Activated CD8-positive, alpha-beta memory T cell treated with anti-CD3 and anti-CD28 coated beads, Interleukin-2, amount 10 ng/mL, durations not matched to agents 7 days and 5 days (primary cell): ENCODE measurements at regions of chr12 and their contacts with region 1.

Region 1: DNA sequence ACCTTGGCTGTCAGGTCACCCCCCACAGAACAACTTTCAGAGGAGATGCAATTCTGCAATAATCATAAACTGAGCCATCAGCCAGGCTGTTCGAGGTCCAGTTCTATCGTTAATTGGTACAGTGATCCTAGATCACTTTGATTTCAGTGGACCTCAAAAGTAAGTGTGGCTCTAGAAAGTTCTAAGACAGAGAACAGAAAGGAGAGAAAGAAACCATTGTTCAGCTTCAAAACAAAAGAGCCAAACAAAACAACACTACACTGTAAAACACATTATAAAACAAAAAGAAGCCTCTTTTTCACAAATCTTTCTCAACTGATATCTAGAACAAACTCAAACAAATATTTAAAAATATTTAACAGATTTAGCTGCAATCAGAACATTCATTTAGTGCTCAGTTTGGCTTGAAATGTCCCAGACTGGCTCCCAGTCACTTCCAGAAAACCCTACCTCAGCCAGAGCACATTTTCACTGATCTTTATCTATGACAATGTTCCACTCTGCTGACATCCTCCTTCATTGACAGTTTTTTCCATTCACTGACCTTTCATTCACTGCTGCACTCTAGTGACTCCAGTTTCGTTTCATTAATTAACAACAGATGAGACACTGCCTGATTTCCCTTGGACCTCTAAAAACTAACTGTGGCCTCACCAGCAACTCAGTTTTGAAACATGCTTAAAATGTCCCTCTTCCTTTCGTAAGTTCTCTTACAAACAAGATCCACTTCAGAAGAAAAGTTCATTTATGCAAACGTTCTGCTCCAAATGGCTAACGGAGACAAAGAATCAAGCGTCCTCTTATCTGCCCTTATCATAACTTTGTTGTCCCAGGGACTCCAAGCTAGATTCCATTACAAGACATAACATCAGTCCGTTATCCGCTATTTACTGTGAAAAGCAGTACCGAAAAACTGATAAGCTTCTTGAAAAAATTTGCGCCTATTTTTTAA is 56.8 kb downstream of the DUSP16 start:
- DNase-seq: no peak
- ATAC-seq: peak; percentile 75
- H3K4me3 Mint-ChIP-seq: peak overlapping the region; percentile 17
- H3K27ac Mint-ChIP-seq: peak overlapping the region; percentile 67
- H3K4me1 Mint-ChIP-seq: peaks cover 51% of the 10 kb centered on the region
- H3K27me3 Mint-ChIP-seq: no peaks in the 10 kb centered on the region

Region 2: DNA sequence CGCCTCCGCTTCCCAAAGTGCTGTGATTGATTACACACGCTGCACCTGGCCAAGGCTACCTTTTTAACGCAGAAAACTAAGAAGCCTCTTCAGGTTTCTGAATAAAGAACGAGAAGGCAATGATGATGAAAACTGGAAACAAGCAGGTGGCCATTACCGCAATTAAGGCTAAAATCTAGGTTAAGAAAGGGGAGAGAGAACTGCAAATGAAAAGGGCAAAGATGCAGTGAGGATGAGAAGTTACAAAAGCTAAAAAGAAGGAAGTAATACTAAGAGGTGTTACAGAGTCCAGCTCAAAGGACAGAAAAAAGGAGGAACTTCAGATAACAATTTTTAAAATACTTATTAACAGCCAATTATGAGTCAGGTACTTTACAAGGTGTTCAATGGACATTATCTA is 22.9 kb before region 1 on chr12:
- CTCF ChIA-PET with region 1: interaction called, 16 read pairs
- DNase-seq: no peak
- ATAC-seq: no peak
- H3K4me3 Mint-ChIP-seq: peak overlapping the region; percentile 79
- H3K27ac Mint-ChIP-seq: peak overlapping the region; percentile 99
- H3K4me1 Mint-ChIP-seq: peaks cover 74% of the 10 kb centered on the region
- H3K27me3 Mint-ChIP-seq: no peaks in the 10 kb centered on the region

Region 3: GRCh38 chr12:12491606-12492005 is 14.2 kb before region 1 on chr12:
- CTCF ChIA-PET with region 1: interaction called, 10 read pairs
- DNase-seq: no peak
- ATAC-seq: peak; percentile 37
- H3K4me3 Mint-ChIP-seq: no peak overlapping the region
- H3K27ac Mint-ChIP-seq: no peak overlapping the region
- H3K4me1 Mint-ChIP-seq: peaks cover 24% of the 10 kb centered on the region
- H3K27me3 Mint-ChIP-seq: no peaks in the 10 kb centered on the region

Region 4: DNA sequence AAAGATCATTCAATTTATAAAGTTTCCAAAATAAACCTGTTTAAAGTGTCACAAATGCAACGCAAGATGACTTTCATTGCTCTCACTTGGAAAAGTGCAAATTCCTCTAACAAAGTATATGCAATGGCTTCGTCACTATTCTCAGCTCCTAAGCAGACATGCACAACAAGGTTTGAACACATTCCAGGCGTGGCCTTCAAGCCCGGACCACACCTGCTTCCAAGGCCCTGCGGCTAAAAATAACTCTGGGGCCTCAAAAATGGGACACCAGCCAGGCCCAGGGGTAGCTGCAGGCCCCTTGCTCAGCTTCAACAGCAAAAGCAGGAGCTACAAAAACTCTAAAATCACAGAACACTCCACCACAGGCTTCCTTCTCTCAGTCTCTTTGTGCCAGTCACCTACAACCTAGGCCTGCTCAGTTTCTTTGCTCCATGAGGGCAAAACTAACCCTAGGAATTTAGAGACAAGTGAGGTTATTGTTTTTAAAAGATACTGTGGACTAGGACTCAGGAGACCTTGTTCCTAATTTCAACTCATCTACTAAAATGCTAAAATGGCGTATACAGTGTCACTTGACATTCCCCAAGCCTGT is 27.5 kb after region 1 on chr12:
- CTCF ChIA-PET with region 1: no interaction called
- DNase-seq: no peak
- ATAC-seq: no peak
- H3K4me3 Mint-ChIP-seq: no peak overlapping the region
- H3K27ac Mint-ChIP-seq: no peak overlapping the region
- H3K4me1 Mint-ChIP-seq: peaks cover 14% of the 10 kb centered on the region
- H3K27me3 Mint-ChIP-seq: no peaks in the 10 kb centered on the region

Region 5: GRCh38 chr12:12611512-12612306 is 105.9 kb after region 1 on chr12 and contains the start of gene CREBL2:
- CTCF ChIA-PET with region 1: no interaction called
- DNase-seq: peak; percentile 89
- ATAC-seq: peak; percentile 89
- H3K4me3 Mint-ChIP-seq: peak within 1 kb of the TSS; percentile 82
- H3K27ac Mint-ChIP-seq: peak within 1 kb of the TSS; percentile 95
- H3K4me1 Mint-ChIP-seq: peaks cover 55% of the 10 kb centered on the region
- H3K27me3 Mint-ChIP-seq: no peaks in the 10 kb centered on the region
- total RNA-seq, gene CREBL2: 16.3 to 20.5 TPM